ENCODE measurements at regions of chr15 and their contacts with region 1.

Region 1: DNA sequence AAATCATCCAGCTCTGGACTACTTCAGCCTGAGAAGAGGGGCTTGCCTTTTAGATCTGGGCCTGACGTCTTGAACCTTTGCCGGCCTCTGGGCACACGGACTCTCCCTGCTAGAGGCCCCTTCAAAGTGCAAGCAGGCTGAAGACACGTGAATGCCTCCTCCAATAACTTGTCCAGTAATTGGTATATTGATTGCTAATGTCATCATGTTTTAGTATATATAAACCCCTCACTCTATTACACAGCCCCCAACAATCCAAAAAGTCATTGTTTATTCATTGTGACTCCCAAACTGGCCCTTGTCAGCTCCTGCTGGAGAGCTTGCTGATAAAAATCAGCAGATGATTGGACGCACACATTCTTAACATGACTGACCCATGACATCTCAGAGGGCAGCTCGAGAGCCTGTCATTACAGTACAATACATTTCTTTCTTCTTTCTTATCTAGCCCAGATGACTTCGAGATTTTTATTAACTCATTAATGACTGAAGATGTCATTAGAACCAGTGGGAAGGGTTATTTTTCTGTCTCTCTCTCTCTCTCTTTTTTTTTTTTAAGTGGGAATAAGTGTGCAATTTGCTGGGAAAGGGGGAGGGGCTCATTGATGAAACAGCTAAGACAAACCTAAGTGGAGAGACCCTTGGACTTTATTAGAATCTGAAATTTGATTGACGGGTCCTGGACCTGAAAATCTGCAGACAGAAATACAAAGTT is 65.5 kb upstream of the NR2F2 start:
- DNase-seq: peak; percentile 81
- H3K4me3 ChIP-seq: no peak overlapping the region
- H3K27ac ChIP-seq: peak overlapping the region; percentile 93
- H3K4me1 ChIP-seq: peaks cover 40% of the 10 kb centered on the region
- H3K27me3 ChIP-seq: no peaks in the 10 kb centered on the region
- CTCF ChIP-seq: no peak

Region 2: DNA sequence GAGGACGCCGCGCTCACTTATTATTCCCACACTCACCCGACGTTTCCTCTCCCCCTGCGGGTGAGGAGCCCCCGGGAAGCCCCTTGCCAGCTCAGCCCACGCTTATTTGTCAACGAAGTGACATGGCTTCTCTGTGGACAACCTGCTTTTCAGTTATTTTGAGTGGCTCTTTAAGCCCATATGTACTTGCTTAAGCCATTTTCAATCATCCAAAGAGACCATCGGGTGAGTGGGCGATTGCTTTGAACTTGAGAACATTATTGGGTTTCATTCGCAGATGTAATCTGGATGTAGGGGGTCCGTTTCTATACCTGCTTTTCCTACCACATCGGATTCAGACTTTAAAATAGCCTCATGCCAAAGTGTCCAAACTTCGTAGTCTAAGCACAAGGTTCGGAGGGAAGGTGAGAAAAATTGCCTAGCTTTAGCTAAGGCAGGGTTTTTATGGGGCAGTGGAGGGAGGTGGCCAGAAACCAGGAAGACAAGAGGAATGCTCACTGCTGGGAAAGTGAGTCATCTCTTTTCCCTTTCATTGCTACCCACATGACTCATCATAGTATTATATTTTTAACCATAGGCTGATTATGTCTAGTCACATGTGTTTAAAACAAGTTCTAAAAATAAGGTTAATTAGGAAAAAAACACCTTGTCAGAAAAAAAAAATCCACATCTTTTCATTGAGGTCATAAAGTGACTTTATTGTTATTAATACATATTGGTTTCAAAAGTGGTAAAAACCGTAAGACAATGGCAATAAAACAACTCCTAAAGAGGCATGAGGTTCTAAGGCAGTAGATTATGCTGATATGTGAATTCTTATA is 707.5 kb before region 1 on chr15:
- CTCF ChIA-PET with region 1: no interaction called
- dilution Hi-C with region 1: no loop called
- in situ Hi-C with region 1: no loop called
- intact Hi-C with region 1: loop called (anchors 5 kb)
- DNase-seq: peak; percentile 90
- H3K4me3 ChIP-seq: no peak overlapping the region
- H3K27ac ChIP-seq: peak overlapping the region; percentile 81
- H3K4me1 ChIP-seq: peaks cover 30% of the 10 kb centered on the region
- H3K27me3 ChIP-seq: no peaks in the 10 kb centered on the region
- CTCF ChIP-seq: no peak

Region 3: DNA sequence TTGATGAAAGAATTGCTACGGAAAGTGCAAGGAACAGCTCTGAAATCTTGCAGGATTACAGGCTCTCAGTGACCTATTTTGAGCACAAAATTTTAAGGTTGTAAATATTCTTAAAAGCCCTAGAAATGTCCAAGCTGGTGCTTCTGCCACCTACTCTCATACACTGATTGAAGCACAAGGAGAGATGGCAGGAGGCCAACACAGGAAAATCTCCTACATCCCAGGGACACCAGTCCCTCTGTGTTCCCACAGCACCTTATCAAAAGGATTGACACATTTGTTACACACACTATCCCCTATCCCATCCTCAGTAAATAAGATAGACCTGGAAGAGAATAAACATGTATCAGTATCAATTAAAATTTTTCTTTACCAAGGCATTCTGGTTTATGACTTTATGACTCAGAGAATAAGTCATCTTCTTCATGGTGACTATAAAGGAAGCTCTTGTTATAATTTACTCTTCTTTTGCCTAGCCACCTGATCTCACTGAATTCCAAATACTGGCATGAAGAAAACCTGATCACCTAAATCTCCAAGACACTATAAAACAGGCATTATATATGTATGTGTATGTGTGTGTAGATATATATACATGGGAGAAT is 142.8 kb before region 1 on chr15:
- CTCF ChIA-PET with region 1: no interaction called
- dilution Hi-C with region 1: no loop called
- in situ Hi-C with region 1: no loop called
- intact Hi-C with region 1: no loop called
- DNase-seq: peak; percentile 60
- H3K4me3 ChIP-seq: no peak overlapping the region
- H3K27ac ChIP-seq: no peak overlapping the region
- H3K4me1 ChIP-seq: peaks cover 4% of the 10 kb centered on the region
- H3K27me3 ChIP-seq: no peaks in the 10 kb centered on the region
- CTCF ChIP-seq: no peak

Region 4: DNA sequence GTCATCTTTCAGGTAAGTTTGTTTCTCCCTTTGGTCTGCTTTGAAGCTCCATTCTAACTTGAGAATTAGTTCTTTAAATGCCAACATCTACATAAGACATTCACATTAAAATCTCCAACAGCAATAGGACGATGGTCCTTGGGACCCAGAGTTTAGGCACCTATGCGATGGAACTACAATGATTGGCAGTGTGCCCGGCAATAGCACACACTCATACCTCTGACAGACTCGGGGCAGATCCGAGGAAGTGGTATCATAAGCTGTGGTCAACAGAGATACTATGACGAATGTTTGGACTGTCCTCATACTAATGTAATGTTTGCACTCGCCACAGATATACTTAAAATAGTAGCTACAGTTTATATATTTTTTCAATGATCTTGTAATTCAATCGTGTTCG is 31.3 kb after region 1 on chr15:
- CTCF ChIA-PET with region 1: no interaction called
- dilution Hi-C with region 1: no loop called
- in situ Hi-C with region 1: no loop called
- intact Hi-C with region 1: no loop called
- DNase-seq: peak; percentile 94
- H3K4me3 ChIP-seq: no peak overlapping the region
- H3K27ac ChIP-seq: peak overlapping the region; percentile 5
- H3K4me1 ChIP-seq: peaks cover 9% of the 10 kb centered on the region
- H3K27me3 ChIP-seq: no peaks in the 10 kb centered on the region
- CTCF ChIP-seq: no peak

Region 5: DNA sequence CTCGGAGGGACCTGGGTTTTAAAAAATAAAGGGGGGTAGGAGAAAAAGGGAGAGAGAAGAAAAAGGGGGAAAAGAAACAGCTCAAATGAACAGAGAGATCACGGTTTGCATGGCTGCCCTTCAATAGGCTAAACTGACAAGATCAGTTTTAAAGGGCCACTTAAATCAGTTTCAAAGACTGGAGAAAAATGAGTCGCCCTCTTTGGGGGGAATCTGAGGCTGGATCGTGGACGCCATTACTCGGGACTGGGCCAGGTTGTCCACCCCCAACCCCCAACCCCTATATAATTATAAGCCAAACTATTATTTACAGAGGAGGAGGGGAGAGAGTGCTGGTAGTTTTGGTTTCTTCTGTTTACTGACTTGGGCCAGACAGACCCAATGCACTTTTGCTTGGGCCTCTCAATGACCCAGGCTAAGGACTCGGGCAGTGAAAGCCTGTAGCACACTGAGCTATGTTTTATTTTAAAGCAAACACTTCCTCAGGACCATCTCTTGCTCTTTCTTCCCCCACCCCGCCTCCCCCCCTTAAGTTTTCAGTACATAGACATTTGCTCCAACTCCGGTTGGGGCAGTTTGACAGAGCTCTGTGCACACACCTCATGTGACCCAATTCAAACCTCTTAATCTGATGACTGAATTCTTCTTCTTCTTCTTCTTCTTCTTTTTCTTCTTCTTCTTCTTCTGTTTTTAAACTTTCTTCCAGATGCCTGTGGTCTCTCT is 71.8 kb after region 1 on chr15:
- CTCF ChIA-PET with region 1: interaction called, 33 read pairs
- dilution Hi-C with region 1: no loop called
- in situ Hi-C with region 1: no loop called
- intact Hi-C with region 1: no loop called
- DNase-seq: no peak
- H3K4me3 ChIP-seq: no peak overlapping the region
- H3K27ac ChIP-seq: no peak overlapping the region
- H3K4me1 ChIP-seq: peaks cover 51% of the 10 kb centered on the region
- H3K27me3 ChIP-seq: no peaks in the 10 kb centered on the region
- CTCF ChIP-seq: no peak